ENCODE measurements at regions of chr1 and their contacts with region 1.

Region 1: DNA sequence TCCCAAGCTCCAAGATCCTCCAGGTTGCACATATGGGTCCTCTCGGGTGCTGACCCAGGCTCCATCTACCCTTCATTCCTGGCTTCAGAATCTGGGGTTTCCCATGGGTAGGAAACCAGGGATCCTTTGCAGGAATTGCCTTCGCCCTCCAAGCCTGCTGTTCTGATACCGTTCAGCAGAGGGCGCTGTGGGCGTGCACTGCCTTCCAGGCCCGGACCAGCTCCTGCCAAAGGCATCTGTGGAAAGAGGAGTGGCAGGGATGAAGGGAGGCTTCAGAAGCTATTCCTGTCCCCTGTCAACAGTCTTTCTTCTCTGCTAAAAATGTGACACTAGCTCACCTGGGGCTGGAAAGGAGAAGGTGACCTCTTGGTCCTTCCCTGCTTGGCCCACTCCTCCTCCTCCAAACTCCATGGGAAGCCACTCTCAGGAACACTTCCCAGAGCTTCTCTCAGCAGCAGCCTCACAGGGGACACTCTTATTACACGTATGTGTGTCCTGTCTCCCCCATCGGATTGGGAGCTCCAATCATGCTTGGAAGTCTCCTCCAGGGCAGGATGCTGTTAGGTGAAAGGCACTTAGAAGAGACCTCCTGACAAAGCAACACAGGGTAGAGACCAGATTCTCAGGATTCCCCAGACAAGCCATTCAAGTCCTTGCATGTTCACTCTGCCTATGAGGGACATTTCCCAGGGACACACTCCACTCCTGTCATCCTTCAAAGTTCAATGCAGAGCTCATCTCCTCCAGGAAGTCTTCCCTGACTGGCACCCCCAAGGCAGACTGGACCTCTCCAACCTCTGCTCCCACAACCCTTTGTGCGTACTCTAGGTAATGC is 71.3 kb downstream of the VWA5B1 start:
- H3K4me3 ChIP-seq: no peak overlapping the region
- H3K27ac ChIP-seq: no peak overlapping the region
- H3K4me1 ChIP-seq: peaks cover 14% of the 10 kb centered on the region
- CTCF ChIP-seq: peak; percentile 69

Region 2: DNA sequence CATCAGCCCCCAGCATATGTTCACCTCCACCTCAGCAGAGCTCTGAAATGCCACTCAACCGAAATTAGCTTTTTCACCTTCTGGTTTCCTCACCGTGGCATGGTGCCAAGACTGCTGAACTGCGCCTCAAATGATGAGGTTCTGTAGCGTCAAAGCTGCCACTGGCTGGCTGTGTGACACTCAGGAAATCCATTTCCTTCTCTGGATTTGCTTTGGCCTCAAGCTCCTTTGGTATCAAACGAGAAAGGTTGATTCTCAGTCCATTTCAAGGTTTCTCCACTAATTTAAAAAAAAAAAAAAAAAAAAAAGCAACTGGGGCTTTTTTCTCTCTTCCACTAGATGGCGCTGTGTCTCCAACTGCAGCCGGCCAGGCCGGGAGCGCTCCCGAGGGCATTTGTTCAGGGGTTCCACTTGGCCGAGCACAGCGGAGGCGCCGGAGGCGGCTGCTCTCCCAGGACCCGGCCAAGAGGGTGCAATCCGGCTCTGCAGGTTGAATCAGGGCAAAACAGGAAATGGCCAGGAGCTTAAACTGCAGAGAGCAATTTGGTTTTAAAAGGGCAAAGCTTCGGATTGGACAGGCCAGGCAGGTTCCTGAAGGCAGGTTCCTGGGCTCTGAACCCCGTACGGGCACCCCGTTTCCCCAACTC is 149.2 kb before region 1 on chr1:
- CTCF ChIA-PET with region 1: interaction called, 26 read pairs
- POLR2A ChIA-PET with region 1: no interaction called
- H3K4me3 ChIP-seq: no peak overlapping the region
- H3K27ac ChIP-seq: no peak overlapping the region
- H3K4me1 ChIP-seq: no peaks in the 10 kb centered on the region
- CTCF ChIP-seq: peak; percentile 68; the same call in 1 of the 2 replicates

Region 3: GRCh38 chr1:20322081-20322824 is 39.8 kb before region 1 on chr1:
- CTCF ChIA-PET with region 1: no interaction called
- POLR2A ChIA-PET with region 1: no interaction called
- H3K4me3 ChIP-seq: no peak overlapping the region
- H3K27ac ChIP-seq: no peak overlapping the region
- H3K4me1 ChIP-seq: no peaks in the 10 kb centered on the region
- CTCF ChIP-seq: no peak

Region 4: GRCh38 chr1:20339811-20340457 is 22.1 kb before region 1 on chr1:
- CTCF ChIA-PET with region 1: interaction called, 11 read pairs
- POLR2A ChIA-PET with region 1: no interaction called
- H3K4me3 ChIP-seq: no peak overlapping the region
- H3K27ac ChIP-seq: no peak overlapping the region
- H3K4me1 ChIP-seq: no peaks in the 10 kb centered on the region
- CTCF ChIP-seq: no peak

Region 5: GRCh38 chr1:20349561-20349960 is 12.5 kb before region 1 on chr1:
- CTCF ChIA-PET with region 1: interaction called, 22 read pairs
- POLR2A ChIA-PET with region 1: no interaction called
- H3K4me3 ChIP-seq: no peak overlapping the region
- H3K27ac ChIP-seq: no peak overlapping the region
- H3K4me1 ChIP-seq: no peaks in the 10 kb centered on the region
- CTCF ChIP-seq: no peak

Region 6: GRCh38 chr1:20376880-20377494 is 15.0 kb after region 1 on chr1:
- CTCF ChIA-PET with region 1: interaction called, 50 read pairs
- POLR2A ChIA-PET with region 1: no interaction called
- H3K4me3 ChIP-seq: no peak overlapping the region
- H3K27ac ChIP-seq: no peak overlapping the region
- H3K4me1 ChIP-seq: no peaks in the 10 kb centered on the region
- CTCF ChIP-seq: peak; percentile 32; the same call in 1 of the 2 replicates

Region 7: GRCh38 chr1:20395255-20395654 is 33.2 kb after region 1 on chr1:
- CTCF ChIA-PET with region 1: interaction called, 13 read pairs
- POLR2A ChIA-PET with region 1: no interaction called
- H3K4me3 ChIP-seq: no peak overlapping the region
- H3K27ac ChIP-seq: no peak overlapping the region
- H3K4me1 ChIP-seq: no peaks in the 10 kb centered on the region
- CTCF ChIP-seq: no peak